ENCODE measurements at regions of chr5 and their contacts with region 1.

Region 1: GRCh38 chr5:77775790-77776553 is at the start of gene TBCA:
- DNase-seq: peak; percentile 81
- H3K4me3 Mint-ChIP-seq: peak within 1 kb of the TSS; percentile 93
- H3K27ac Mint-ChIP-seq: peak within 1 kb of the TSS; percentile 96
- H3K4me1 Mint-ChIP-seq: peaks cover 46% of the 10 kb centered on the region
- H3K27me3 Mint-ChIP-seq: no peaks in the 10 kb centered on the region
- total RNA-seq, gene TBCA: 168 to 190 TPM

Region 2: DNA sequence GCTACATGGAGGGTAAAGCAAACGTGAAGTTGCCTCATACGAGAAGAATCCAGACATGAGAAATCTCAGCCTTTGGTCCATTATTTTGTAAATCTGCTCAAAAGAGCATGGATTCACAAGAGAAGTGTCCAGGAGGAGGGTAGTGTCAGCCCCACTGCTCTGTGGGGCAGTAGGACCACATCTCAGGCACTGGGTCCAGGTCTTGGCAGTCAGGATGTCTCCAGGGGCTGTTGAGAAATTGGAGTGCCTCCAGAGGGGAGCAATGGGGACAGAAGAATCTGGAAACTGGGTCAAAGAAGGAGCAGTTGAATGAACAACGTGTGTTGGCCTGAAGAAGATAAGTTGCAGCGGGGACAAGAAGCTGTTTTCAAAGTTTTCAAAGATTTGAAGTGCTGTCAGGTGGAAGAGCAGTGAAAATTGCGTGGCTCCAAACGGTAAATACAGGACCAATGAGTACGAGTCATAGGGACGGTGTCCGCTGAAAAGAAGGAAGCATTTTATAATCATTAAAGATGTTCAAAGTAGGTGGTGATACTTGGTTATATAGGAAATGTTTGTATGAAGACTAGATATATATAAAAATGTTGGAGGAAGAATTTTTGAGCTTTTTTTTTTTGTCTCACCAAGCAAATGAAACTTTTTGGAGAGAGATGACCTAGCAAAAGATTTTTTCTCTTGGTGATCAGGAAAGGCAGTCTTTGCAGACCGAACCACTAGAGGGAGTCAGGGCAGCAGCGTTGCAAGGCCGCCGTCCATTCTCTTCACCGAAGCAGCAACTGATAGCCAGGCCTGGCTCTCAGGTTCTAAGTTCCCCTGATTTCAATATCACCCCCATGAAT is 631.8 kb before region 1 on chr5:
- CTCF ChIA-PET with region 1: no interaction called
- intact Hi-C with region 1: loop called (anchors 5 kb)
- DNase-seq: peak; percentile 80
- H3K4me3 Mint-ChIP-seq: no peak overlapping the region
- H3K27ac Mint-ChIP-seq: no peak overlapping the region
- H3K4me1 Mint-ChIP-seq: peaks cover 27% of the 10 kb centered on the region
- H3K27me3 Mint-ChIP-seq: peaks cover 3% of the 10 kb centered on the region

Region 3: GRCh38 chr5:77630258-77631089 is 145.5 kb before region 1 on chr5:
- CTCF ChIA-PET with region 1: no interaction called
- intact Hi-C with region 1: loop called (anchors 1 kb)
- DNase-seq: peak; percentile 72
- H3K4me3 Mint-ChIP-seq: peak overlapping the region; percentile 77
- H3K27ac Mint-ChIP-seq: no peak overlapping the region
- H3K4me1 Mint-ChIP-seq: peaks cover 20% of the 10 kb centered on the region
- H3K27me3 Mint-ChIP-seq: peaks cover 70% of the 10 kb centered on the region

Region 4: DNA sequence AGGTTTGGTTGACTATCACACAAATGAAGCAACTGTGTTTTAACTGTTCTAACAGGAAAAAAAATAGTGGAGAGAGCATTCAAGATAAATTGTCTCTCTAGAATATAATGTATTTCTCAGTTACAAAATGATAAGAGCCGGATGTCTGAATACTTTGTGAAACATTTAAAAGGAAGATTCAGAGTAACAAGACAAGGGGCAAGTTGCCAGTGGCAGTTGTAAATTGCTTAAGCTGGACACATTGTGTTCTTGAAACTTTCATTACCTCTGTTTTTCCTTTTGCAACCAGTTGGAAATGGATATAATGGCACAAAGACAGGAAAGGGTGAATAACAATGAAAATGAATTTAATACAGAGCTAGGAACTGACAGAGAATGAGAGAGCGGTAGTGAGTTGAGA is 15.4 kb after region 1 on chr5:
- CTCF ChIA-PET with region 1: no interaction called
- intact Hi-C with region 1: no loop called
- DNase-seq: no peak
- H3K4me3 Mint-ChIP-seq: no peak overlapping the region
- H3K27ac Mint-ChIP-seq: no peak overlapping the region
- H3K4me1 Mint-ChIP-seq: no peaks in the 10 kb centered on the region
- H3K27me3 Mint-ChIP-seq: peaks cover 2% of the 10 kb centered on the region

Region 5: DNA sequence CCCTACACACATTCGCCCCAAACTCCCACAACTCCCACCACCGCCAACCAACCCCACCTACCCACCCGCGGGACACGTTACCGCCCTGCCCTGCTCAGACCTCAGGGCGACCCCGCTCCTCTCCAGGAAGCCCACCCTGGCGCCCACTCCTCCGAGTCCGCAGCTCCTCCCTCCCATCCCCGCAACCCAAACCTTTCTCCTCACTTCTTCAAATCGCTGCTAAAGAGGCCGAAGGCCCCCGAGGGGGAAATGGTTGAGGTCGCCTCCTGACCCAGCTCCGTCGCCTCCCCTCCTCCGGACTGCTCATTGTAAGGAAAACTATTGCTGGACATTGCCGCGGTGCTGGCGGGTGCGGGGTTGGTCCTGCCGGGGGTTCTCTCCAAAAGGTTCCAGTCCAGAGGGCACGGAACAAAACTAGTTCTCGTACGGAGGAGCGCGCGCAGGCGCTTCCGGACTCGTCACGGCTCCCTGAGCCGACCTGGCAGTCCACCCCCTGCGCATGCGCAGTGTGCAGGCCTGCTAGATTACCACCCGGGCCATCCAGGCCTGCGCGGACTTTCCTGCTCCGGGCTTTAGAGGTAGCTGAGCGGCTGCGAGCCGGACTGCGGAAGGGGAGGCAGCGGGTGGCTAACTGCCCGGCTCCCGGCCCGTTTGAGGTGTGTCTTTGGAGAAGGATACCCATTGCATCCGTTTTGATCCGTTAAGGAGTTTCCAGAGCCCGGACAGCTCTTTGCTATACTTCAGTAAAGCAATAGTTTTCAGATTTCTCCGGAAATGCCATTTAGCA is 518.5 kb after region 1 on chr5 and contains the start of gene AP3B1:
- CTCF ChIA-PET with region 1: interaction called, 3 read pairs
- intact Hi-C with region 1: loop called (anchors 2 kb)
- DNase-seq: peak; percentile 97
- H3K4me3 Mint-ChIP-seq: peak within 1 kb of the TSS; percentile 91
- H3K27ac Mint-ChIP-seq: peak within 1 kb of the TSS; percentile 97
- H3K4me1 Mint-ChIP-seq: peaks cover 32% of the 10 kb centered on the region
- H3K27me3 Mint-ChIP-seq: no peaks in the 10 kb centered on the region
- total RNA-seq, gene AP3B1: 29.9 to 33.0 TPM

Region 6: GRCh38 chr5:78984439-78985115 is 1208.6 kb after region 1 on chr5:
- CTCF ChIA-PET with region 1: no interaction called
- intact Hi-C with region 1: loop called (anchors 2 kb)
- DNase-seq: peak; percentile 81
- H3K4me3 Mint-ChIP-seq: peak overlapping the region; percentile 84
- H3K27ac Mint-ChIP-seq: peak overlapping the region; percentile 87
- H3K4me1 Mint-ChIP-seq: peaks cover 35% of the 10 kb centered on the region
- H3K27me3 Mint-ChIP-seq: no peaks in the 10 kb centered on the region

Measured in activated naive CD4-positive, alpha-beta T cell treated with anti-CD3 and anti-CD28 coated beads for 36 hours (primary cell).